Caco-2 (cell line): ENCODE measurements at regions of chr11 and their contacts with region 1.

Region 1: DNA sequence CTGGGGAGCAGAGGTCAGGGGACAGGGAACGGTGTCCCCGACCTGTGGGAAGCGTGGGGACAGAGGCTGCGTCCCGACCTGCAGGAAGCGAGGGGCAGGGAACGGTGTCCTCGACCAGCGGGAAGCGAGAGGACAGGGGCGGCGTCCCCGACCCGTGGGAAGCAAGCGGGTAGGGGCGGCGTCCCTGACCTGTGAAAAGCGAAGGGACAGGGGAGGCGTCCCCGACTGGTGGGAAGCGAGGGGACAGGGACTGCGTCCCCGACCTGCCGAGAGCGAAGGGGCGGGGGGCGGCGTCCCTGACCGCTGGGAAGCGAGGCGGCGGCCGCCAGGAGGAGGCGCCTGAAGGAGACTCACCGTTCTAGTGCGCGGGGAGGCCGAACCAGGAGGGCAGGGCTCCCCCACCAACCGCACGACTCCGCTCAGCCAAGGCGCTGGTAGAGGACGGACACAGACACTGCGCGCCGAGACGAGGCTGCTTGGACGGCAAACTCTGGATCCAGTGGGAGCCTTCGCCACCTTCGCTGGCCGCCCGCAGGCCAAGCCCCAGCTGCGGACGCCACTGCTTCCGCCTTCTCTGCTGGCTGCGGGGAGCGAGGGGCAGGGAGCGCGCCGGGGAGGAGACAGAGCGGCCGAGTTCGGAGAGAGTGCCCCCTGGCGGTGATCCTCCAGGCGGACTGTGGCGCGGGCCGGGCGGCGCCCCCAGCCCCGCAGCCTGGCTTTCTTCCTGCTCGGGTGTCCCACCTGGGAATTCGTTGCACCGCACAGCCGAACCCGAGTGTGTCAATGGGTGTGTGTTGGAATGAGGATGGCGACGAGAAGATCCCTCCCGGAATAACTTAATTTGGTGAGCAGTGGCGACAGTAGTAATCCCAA is at the start of gene TRAF6:
- DNase-seq: peak; percentile 88 to 95
- H3K4me3 ChIP-seq: peak within 1 kb of the TSS; percentile 89
- H3K4me3 Mint-ChIP-seq: peak within 1 kb of the TSS; percentile 100
- H3K27ac Mint-ChIP-seq: peak within 1 kb of the TSS; percentile 89
- H3K4me1 ChIP-seq: peaks cover 5% of the 10 kb centered on the region; the same call in 1 of the 2 replicates
- H3K4me1 Mint-ChIP-seq: peaks cover 10% of the 10 kb centered on the region
- H3K27me3 ChIP-seq: no peaks in the 10 kb centered on the region
- H3K27me3 Mint-ChIP-seq: peaks cover under 1% of the 10 kb centered on the region
- CTCF ChIP-seq: peak; percentile 87 to 91
- total RNA-seq, gene TRAF6: 10.9 and 12.7 TPM in 2 replicates

Region 2: GRCh38 chr11:36485298-36486002 is 24.5 kb before region 1 on chr11:
- CTCF ChIA-PET with region 1: no interaction called
- POLR2A ChIA-PET with region 1: no interaction called
- intact Hi-C with region 1: no loop called
- DNase-seq: no peak
- H3K4me3 ChIP-seq: no peak overlapping the region
- H3K4me3 Mint-ChIP-seq: no peak overlapping the region
- H3K27ac Mint-ChIP-seq: no peak overlapping the region
- H3K4me1 ChIP-seq: no peaks in the 10 kb centered on the region
- H3K4me1 Mint-ChIP-seq: no peaks in the 10 kb centered on the region
- H3K27me3 ChIP-seq: no peaks in the 10 kb centered on the region
- H3K27me3 Mint-ChIP-seq: no peaks in the 10 kb centered on the region
- CTCF ChIP-seq: no peak

Region 3: GRCh38 chr11:36541001-36541400 is 31.1 kb after region 1 on chr11:
- CTCF ChIA-PET with region 1: interaction called, 5 read pairs
- POLR2A ChIA-PET with region 1: no interaction called
- intact Hi-C with region 1: loop called (anchors 2 kb)
- DNase-seq: peak in 1 of 2 experiments; percentile 32
- H3K4me3 ChIP-seq: no peak overlapping the region
- H3K4me3 Mint-ChIP-seq: no peak overlapping the region
- H3K27ac Mint-ChIP-seq: no peak overlapping the region
- H3K4me1 ChIP-seq: no peaks in the 10 kb centered on the region
- H3K4me1 Mint-ChIP-seq: no peaks in the 10 kb centered on the region
- H3K27me3 ChIP-seq: peaks cover 2% of the 10 kb centered on the region; the same call in 1 of the 2 replicates
- H3K27me3 Mint-ChIP-seq: peaks cover 18% of the 10 kb centered on the region
- CTCF ChIP-seq: peak; percentile 13 to 42

Region 4: GRCh38 chr11:36724742-36725385 is 214.9 kb after region 1 on chr11:
- CTCF ChIA-PET with region 1: no interaction called
- POLR2A ChIA-PET with region 1: no interaction called
- intact Hi-C with region 1: no loop called
- DNase-seq: no peak
- H3K4me3 ChIP-seq: no peak overlapping the region
- H3K4me3 Mint-ChIP-seq: no peak overlapping the region
- H3K27ac Mint-ChIP-seq: no peak overlapping the region
- H3K4me1 ChIP-seq: no peaks in the 10 kb centered on the region
- H3K4me1 Mint-ChIP-seq: no peaks in the 10 kb centered on the region
- H3K27me3 ChIP-seq: no peaks in the 10 kb centered on the region; the same call in 1 of the 2 replicates
- H3K27me3 Mint-ChIP-seq: peaks cover 15% of the 10 kb centered on the region
- CTCF ChIP-seq: no peak